ENCODE measurements at regions of chr21 and their contacts with region 1.

Region 1: GRCh38 chr21:24895885-24896734 is 711.2 kb downstream of the MRPL39 start:
- DNase-seq: peak in 1 of 2 experiments; percentile 48
- H3K4me3 ChIP-seq: no peak overlapping the region
- H3K27ac ChIP-seq: no peak overlapping the region
- H3K4me1 ChIP-seq: peaks cover 0 to 2% (median 0%) of the 10 kb centered on the region in 4 experiments; a peak in 2 of 7 replicates
- H3K27me3 ChIP-seq: no peaks in the 10 kb centered on the region
- CTCF ChIP-seq: peak in 2 of 3 experiments; percentile 58 to 68; a peak in 3 of 4 replicates
- EP300 ChIP-seq: no peak
- POLR2A ChIP-seq: no peak
- RAD21 ChIP-seq: peak; percentile 88 to 89

Region 2: DNA sequence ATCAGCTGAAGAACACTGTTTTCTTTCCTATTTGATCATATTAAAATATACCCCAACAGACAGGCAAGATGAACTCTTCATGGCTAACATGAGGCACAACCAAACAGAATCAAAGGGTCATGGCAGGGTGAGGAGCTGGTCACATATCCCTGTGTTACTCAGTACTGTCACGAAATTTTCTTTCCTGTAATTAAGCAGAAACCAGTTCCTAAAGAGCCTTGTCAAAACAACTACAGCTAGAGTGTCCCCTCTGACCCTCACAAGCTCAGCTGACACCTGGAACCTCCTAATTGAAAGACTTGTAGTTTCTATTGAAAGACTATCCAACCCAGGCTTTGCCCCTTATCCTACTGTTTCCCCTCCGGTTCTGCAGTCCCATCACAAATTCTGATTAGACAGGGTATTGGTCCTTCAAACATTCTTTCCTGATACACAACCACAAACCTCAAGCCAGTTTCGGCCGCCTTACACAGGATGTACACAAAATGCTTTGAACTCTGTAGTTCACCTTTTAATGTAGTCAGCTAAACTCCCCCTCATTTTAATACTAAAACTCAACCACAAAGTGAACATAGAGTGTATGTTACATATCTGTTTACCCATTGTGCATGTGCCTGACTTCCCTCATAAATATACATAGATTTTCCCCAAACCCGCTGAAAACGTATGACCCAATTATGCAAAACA is 59.3 kb after region 1 on chr21:
- CTCF ChIA-PET with region 1: no interaction called
- POLR2A ChIA-PET with region 1: no interaction called
- DNase-seq: no peak
- H3K4me3 ChIP-seq: no peak overlapping the region
- H3K27ac ChIP-seq: no peak overlapping the region
- H3K4me1 ChIP-seq: no peaks in the 10 kb centered on the region
- H3K27me3 ChIP-seq: no peaks in the 10 kb centered on the region
- CTCF ChIP-seq: no peak
- EP300 ChIP-seq: no peak
- POLR2A ChIP-seq: no peak
- RAD21 ChIP-seq: no peak

Region 3: DNA sequence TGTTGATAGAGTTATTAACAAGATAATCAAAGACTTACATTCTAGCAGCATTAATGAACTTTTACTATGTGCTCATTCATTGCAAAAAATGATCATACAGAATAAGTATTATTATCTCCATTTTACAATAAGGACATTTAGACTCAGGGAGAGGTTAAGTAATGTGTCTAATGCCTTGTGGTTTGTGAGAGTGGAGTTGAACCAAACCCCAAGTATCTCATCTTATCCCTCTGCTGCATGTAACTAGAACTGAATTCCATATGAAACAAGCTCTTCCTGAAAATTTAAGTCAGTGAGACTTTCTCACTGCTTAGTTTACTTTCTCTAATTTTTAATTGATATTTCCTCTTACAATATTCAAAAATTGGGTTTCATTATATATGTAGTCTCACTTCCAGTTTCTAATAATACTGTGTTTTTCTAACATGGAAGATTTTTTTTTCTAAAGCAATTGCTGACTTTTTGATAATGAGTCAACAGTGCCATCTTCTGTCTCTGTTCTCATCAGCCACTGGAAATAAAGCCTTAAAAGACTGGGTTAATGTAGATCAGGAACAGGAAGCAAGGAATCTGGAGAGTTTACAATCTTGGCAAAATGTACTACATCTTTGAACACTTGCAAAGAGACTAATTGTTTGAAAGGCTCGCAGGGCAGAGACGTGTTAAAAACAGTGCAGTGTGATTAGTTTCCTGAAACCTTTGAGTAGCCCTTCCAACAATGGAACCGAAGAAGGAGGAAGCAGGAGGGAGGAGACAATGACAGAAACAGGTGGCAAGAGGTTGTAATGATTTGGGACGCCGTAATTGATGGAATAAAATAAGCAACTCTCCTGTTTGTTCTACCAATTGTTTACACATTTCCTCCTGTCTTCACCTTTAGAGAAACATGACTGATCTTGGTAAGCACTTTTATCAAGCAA is 143.6 kb after region 1 on chr21:
- CTCF ChIA-PET with region 1: interaction called, 35 read pairs
- POLR2A ChIA-PET with region 1: no interaction called
- DNase-seq: no peak
- H3K4me3 ChIP-seq: no peak overlapping the region; a peak in 1 of 8 replicates
- H3K27ac ChIP-seq: no peak overlapping the region
- H3K4me1 ChIP-seq: no peaks in the 10 kb centered on the region
- H3K27me3 ChIP-seq: no peaks in the 10 kb centered on the region
- CTCF ChIP-seq: peak in 2 of 3 experiments; percentile 48 to 57; a peak in 2 of 4 replicates
- EP300 ChIP-seq: no peak
- POLR2A ChIP-seq: no peak
- RAD21 ChIP-seq: peak; percentile 73 to 77

Measured in H1 (cell line).